ENCODE measurements at regions of chr21 and their contacts with region 1.

Region 1: DNA sequence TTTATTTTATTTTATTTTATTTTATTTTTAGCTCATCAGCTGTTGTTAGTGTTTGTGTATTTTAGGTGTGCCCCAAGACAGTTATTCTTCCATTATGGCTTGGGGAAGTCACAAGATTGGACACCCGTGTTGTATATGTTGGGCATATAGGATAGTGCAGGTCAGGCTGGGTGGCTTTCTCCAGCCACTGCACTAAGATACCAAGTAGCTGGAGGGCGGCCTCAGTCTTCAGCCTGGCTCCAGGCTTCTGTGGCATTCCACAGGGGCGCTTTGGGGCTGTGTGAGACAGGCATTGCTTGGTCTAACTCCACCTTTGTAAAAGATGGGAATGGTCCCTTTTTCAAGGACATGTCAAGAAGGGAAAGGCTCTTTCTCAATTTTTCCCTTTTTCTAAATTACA is 16.5 kb downstream of the RRP1B start:
- DNase-seq: no peak
- ATAC-seq: no peak
- H3K4me3 ChIP-seq: no peak overlapping the region
- H3K27ac ChIP-seq: no peak overlapping the region
- H3K4me1 ChIP-seq: no peaks in the 10 kb centered on the region
- H3K27me3 ChIP-seq: no peaks in the 10 kb centered on the region
- CTCF ChIP-seq: no peak
- POLR2A ChIP-seq: no peak

Region 2: DNA sequence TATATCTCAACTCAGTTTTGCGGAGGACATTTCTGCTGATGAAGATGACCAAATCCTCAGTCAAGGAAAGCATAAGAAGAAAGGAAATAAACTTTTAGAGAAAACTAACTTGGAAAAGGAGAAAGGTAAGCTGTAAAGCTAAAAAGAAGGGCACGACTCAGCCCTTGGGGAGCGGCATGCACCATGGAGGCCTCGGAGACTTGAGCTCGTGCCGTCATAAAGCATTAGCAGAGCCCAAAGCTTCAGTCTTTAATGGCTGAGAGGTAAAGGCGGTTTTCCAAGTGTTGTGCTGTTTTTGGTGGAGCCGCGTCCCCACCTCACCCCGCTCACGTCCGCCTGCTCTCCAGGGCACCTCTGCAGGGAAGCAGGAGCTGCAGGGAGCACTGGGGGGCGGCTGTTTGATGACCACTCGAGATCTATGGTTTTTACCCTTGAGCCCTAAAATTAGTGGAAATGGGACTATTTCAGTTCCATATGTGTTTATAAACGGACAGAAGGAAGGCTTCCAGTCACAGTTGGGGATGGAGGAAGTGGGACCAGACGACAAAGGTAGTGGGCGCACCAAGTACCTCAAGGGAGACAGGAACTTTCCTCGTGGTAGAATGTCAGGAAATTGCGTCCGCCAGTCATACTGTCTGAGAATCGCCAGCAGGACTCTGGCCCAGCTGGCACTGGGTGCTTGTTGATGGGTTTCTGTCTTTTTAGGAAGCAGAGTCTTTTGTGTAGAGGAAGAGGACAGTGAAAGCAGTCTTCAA is 11.1 kb after region 1 on chr21:
- in situ Hi-C with region 1: no loop called
- intact Hi-C with region 1: loop called (anchors 1 kb)
- DNase-seq: no peak
- ATAC-seq: no peak
- H3K4me3 ChIP-seq: no peak overlapping the region
- H3K27ac ChIP-seq: no peak overlapping the region
- H3K4me1 ChIP-seq: no peaks in the 10 kb centered on the region
- H3K27me3 ChIP-seq: no peaks in the 10 kb centered on the region
- CTCF ChIP-seq: no peak
- POLR2A ChIP-seq: no peak